ENCODE measurements at regions of chr19 and their contacts with region 1.

Region 1: DNA sequence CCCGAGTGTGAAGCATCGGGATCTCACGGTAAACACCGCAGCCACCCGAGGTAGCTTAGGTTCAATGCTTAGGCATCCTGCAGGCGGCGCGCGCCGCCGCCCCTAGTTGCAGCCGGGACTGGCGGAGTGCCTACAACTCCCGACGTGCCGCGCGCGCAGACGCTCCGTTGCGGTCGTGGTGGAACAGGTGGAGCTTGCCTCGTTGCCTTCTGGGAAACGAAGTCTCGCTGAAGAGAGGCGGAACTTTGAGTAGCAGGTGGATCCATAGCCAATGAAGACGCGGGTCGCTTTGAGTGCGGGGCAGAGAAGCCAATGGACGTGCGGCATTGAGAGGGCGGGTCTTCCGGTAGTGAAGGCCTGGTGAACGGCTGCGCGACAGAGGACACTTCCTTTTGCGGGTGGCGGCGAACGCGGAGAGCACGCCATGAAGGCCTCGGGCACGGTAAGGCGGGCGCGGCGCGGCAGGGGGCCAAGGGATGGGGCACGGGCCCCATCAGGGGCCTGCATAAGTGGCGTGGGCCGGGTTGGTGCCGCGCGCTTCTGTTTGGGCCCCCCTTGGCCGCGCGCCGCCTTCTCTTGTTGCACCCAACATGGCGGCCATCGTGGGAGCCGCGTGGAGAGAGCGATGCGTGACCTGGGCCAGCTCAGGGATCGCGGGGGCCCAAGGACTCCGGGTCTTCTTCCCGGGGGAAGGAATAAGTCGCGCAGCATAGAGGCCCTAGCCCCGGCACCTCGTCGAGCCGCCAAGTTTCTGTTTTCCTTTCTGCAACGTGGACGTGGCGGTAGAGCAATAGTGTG is at the start of gene RPL18A:
- DNase-seq: peak; percentile 100
- H3K4me3 ChIP-seq: peak within 1 kb of the TSS; percentile 90
- H3K27ac ChIP-seq: peak within 1 kb of the TSS; percentile 65
- H3K4me1 ChIP-seq: peaks cover 36% of the 10 kb centered on the region
- CTCF ChIP-seq: peak; percentile 93
- total RNA-seq, gene RPL18A: 2,643 and 3,019 TPM in 2 replicates

Region 2: DNA sequence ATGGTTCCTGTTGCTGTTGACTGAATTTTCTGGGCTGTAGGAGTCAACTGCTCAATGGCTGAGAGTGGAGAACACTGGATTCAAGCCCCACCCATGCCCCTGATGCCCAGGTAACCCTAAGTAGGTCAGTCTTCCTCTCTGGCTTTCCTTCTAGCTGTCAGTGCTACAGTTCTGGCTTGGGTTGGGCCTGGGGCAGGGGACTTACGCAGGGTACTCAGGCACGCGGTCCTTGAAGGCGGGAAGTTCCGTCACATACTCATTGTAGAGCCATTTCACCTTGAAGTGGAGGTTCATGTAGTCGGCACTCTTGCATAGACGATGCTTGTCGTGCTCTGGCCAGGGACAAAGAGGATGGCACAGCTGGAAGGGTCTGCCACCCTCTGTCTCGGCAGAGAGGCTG is 227.2 kb before region 1 on chr19:
- CTCF ChIA-PET with region 1: no interaction called
- POLR2A ChIA-PET with region 1: no interaction called
- intact Hi-C with region 1: no loop called
- DNase-seq: no peak
- H3K4me3 ChIP-seq: no peak overlapping the region
- H3K27ac ChIP-seq: no peak overlapping the region
- H3K4me1 ChIP-seq: no peaks in the 10 kb centered on the region
- CTCF ChIP-seq: no peak

Region 3: DNA sequence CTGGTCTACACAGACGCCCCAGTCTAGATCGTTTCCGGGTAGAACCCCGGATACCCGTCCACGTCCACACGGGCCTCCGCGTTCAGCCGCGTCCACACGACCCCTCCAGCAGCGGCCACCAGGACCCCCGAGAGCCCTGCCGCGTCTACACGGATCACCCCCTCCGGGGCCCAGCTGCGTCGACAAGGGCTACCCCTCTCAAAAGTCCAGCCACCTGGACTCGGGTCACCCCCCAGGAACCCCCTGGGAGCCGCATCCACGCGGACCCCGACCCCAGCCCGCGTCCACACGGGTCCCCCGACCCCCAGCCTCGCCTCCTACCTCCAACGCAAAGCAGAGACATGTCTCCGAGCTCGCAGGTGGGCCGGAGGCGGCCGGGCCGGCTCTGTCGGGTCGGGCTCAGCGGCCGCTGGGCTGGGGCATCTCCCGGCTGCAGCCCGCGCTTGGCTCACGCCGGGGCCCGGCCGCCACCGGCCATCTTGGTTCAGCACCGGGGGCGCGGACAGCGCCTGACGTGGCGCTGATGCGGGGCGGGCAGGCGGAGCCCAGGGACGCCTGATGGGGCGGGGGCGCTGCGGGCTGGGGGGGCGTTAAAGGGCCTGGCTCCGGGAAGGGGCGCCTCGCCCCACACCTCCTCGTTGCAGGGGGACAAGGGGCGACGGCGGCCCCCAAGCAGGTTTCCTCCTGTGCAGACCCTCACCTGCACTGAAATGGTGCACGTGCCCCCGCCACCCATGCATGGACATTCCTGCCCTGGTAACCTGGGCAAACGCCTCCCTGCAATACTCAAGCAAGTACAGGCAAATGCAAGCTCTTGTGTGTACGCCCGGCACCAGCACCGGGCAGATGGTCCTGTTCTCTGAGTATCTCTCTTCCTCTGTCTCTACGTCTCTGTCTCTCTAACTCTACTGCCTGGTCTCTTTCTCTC is 171.6 kb before region 1 on chr19 and contains the start of gene UNC13A:
- CTCF ChIA-PET with region 1: no interaction called
- POLR2A ChIA-PET with region 1: no interaction called
- intact Hi-C with region 1: no loop called
- DNase-seq: no peak
- H3K4me3 ChIP-seq: no peak within 1 kb of the TSS
- H3K27ac ChIP-seq: no peak within 1 kb of the TSS
- H3K4me1 ChIP-seq: no peaks in the 10 kb centered on the region
- CTCF ChIP-seq: no peak
- total RNA-seq, gene UNC13A: 0.80 and 0.92 TPM in 2 replicates

Region 4: GRCh38 chr19:17703824-17704463 is 155.8 kb before region 1 on chr19:
- CTCF ChIA-PET with region 1: no interaction called
- POLR2A ChIA-PET with region 1: no interaction called
- intact Hi-C with region 1: loop called (anchors 1 kb)
- DNase-seq: peak; percentile 75
- H3K4me3 ChIP-seq: no peak overlapping the region
- H3K27ac ChIP-seq: no peak overlapping the region
- H3K4me1 ChIP-seq: no peaks in the 10 kb centered on the region
- CTCF ChIP-seq: peak; percentile 98

Region 5: GRCh38 chr19:17766543-17767131 is 93.1 kb before region 1 on chr19:
- CTCF ChIA-PET with region 1: interaction called, 12 read pairs
- POLR2A ChIA-PET with region 1: no interaction called
- intact Hi-C with region 1: no loop called
- DNase-seq: peak; percentile 90
- H3K4me3 ChIP-seq: no peak overlapping the region
- H3K27ac ChIP-seq: no peak overlapping the region
- H3K4me1 ChIP-seq: peaks cover 11% of the 10 kb centered on the region
- CTCF ChIP-seq: peak; percentile 97

Region 6: DNA sequence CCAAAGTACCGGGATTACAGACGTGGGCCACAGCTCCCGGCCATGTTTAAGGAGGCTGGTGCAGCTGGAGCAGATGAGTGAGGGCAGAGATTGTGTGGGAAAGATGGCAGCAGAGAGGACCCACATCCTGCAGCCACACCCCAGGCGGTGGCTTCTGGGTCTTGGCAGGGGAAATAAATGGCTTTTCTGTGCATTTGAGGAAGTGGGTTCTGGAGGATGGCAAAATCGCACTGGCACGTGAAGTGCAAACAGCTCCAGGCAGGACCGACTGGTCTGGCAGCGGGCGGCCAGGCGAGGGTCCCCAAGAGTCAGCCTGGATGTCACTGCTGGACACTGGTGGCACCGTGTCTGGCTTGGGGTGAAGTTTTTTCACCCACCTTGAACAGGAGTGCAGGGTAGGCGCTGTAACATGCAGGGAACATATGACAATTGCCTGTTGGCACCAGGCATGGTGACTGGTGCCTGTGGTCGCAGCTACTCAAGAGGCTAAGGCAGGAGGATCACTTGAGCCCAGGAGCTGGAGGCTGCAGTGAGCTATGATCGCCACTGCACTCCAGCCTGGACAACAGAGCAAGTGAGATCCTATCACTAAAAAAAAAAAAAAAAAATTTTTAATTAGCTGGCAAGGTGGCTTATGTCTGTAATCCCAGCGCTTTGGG is 56.3 kb before region 1 on chr19:
- CTCF ChIA-PET with region 1: interaction called, 18 read pairs
- POLR2A ChIA-PET with region 1: no interaction called
- intact Hi-C with region 1: no loop called
- DNase-seq: no peak
- H3K4me3 ChIP-seq: no peak overlapping the region
- H3K27ac ChIP-seq: no peak overlapping the region
- H3K4me1 ChIP-seq: no peaks in the 10 kb centered on the region
- CTCF ChIP-seq: no peak

Region 7: GRCh38 chr19:17847538-17848366 is 12.0 kb before region 1 on chr19 and contains the start of gene JAK3:
- CTCF ChIA-PET with region 1: interaction called, 11 read pairs
- POLR2A ChIA-PET with region 1: interaction called, 14 read pairs
- intact Hi-C with region 1: no loop called
- DNase-seq: peak; percentile 87
- H3K4me3 ChIP-seq: peak within 1 kb of the TSS; percentile 66
- H3K27ac ChIP-seq: peak within 1 kb of the TSS; percentile 81
- H3K4me1 ChIP-seq: peaks cover 49% of the 10 kb centered on the region
- CTCF ChIP-seq: no peak
- total RNA-seq, gene JAK3: 9.4 and 14.0 TPM in 2 replicates

Region 8: DNA sequence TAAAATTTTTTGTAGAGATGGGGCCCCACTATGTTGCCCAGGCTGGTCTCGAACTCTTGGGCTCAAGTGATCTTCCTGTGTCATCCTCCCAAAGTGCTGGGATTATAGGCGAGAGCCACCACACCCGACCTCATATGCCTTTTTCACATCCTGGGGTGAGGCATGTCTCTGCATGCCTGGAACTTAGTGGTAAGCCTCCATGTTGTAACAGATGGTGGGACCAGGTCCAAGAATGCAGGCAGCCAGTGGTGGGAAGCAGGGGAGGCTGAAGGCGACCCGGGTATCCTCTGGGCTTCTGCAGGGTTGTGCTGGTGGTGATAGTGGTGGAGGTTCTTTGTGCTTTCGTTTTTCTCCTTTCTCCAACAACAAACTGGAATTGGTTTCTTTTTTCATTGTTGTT is 43.0 kb after region 1 on chr19:
- CTCF ChIA-PET with region 1: no interaction called
- POLR2A ChIA-PET with region 1: no interaction called
- intact Hi-C with region 1: no loop called
- DNase-seq: no peak
- H3K4me3 ChIP-seq: no peak overlapping the region
- H3K27ac ChIP-seq: no peak overlapping the region
- H3K4me1 ChIP-seq: no peaks in the 10 kb centered on the region
- CTCF ChIP-seq: no peak

Region 9: DNA sequence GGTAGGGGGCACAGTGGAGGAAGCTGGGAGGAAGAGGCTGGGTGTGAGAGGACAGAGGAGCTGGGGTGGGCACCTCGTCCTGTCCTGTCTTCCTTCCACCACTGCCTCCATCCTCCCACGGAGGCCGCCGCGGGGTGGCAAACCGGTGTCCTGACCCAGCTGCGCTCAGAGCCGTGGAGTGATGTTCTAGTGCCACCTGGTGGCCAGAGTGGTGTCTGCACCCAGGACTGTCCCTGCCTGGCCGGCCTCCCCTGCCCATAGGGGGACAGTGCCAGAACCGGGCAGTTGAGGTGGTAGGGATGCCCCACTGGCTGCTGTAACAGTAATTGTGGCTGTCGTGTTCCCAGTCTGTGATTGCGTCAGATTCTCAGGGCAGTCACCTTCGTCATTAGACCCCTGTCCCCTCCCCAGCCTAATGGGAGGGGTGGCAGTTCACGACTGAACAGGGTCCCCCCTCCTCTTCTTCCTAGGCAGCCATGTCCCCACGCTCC is 137.1 kb after region 1 on chr19:
- CTCF ChIA-PET with region 1: interaction called, 4 read pairs
- POLR2A ChIA-PET with region 1: no interaction called
- intact Hi-C with region 1: loop called (anchors 2 kb)
- DNase-seq: peak; percentile 84
- H3K4me3 ChIP-seq: peak overlapping the region; percentile 68
- H3K27ac ChIP-seq: peak overlapping the region; percentile 72
- H3K4me1 ChIP-seq: peaks cover 31% of the 10 kb centered on the region
- CTCF ChIP-seq: peak; percentile 95

Region 10: GRCh38 chr19:18224525-18225354 is 365.0 kb after region 1 on chr19:
- CTCF ChIA-PET with region 1: no interaction called
- POLR2A ChIA-PET with region 1: no interaction called
- intact Hi-C with region 1: no loop called
- DNase-seq: peak; percentile 93
- H3K4me3 ChIP-seq: peak overlapping the region; percentile 66
- H3K27ac ChIP-seq: no peak overlapping the region
- H3K4me1 ChIP-seq: peaks cover 44% of the 10 kb centered on the region
- CTCF ChIP-seq: no peak